ENCODE measurements at regions of chr12 and their contacts with region 1.

Region 1: DNA sequence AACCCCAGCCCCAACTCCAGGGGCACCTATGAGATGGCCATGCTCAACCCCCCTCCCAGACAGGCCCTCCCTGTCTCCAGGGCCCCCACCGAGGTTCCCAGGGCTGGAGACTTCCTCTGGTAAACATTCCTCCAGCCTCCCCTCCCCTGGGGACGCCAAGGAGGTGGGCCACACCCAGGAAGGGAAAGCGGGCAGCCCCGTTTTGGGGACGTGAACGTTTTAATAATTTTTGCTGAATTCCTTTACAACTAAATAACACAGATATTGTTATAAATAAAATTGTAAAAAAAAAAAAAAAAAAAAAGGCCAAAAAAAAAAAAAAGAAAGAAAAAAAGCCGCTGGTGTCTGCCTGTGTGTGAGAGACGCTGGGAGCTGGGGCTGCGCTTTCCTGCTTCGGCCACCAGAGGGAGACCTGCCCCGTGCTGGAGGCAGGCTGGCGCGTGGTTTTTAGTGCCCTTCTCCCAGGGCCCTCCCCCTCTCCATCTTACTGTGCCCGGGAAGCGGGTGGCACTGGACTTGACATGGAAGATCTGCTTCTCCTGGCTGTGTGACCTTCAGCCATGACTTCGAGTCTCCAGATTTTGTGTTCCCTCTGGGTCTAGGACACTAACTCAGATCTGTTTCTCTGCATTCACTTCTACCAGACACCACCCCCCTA is 3.4 kb upstream of the NXPH4 start:
- DNase-seq: peak; percentile 92
- ATAC-seq: peak; percentile 69
- H3K4me3 Mint-ChIP-seq: no peak overlapping the region
- H3K27ac Mint-ChIP-seq: no peak overlapping the region
- H3K4me1 Mint-ChIP-seq: peaks cover 25% of the 10 kb centered on the region
- H3K27me3 Mint-ChIP-seq: peaks cover 38% of the 10 kb centered on the region

Region 2: GRCh38 chr12:57129889-57130288 is 83.3 kb before region 1 on chr12:
- CTCF ChIA-PET with region 1: no interaction called
- POLR2A ChIA-PET with region 1: no interaction called
- intact Hi-C with region 1: no loop called
- DNase-seq: no peak
- ATAC-seq: no peak
- H3K4me3 Mint-ChIP-seq: peak overlapping the region; percentile 18
- H3K27ac Mint-ChIP-seq: no peak overlapping the region
- H3K4me1 Mint-ChIP-seq: peaks cover 22% of the 10 kb centered on the region
- H3K27me3 Mint-ChIP-seq: peaks cover 3% of the 10 kb centered on the region

Region 3: DNA sequence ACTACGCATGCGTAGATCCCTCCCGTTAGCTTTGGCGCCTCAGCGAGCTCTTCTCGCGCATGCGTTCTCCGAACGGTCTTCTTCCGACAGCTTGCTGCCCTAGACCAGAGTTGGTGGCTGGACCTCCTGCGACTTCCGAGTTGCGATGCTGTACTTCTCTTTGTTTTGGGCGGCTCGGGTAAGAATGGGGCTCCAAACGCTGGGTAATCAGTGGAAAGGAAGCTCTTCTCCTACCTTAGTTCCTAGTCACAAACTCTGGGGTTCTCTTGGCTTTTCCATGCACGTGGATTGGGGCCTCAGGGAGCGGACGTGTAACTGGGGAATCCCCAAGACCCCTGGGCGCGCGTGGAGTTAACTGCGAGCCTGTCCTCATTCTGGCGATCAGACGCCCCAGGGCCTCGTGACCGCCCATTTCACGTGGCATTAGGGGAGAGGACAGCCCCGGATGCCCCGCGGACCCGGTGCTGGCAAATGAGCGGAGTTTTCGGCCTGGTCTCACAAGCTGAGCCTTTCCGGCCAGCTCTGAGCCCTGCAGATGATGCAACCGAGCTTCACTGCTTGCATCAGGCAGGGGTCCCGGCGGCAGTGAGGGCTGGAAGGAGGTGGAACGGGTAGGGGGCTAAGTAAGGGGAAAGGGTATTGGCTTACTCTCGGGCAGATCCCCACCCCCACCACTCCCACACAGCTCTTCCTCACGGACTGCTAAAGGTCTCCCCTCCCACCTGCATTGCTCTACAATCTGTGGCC is 16.6 kb after region 1 on chr12 and contains the start of gene SHMT2:
- CTCF ChIA-PET with region 1: interaction called, 108 read pairs
- POLR2A ChIA-PET with region 1: interaction called, 4 read pairs
- intact Hi-C with region 1: loop called in 1 of 2 experiments (anchors 2 kb)
- DNase-seq: peak; percentile 97
- ATAC-seq: peak; percentile 73
- H3K4me3 Mint-ChIP-seq: peak within 1 kb of the TSS; percentile 100
- H3K27ac Mint-ChIP-seq: peak within 1 kb of the TSS; percentile 99
- H3K4me1 Mint-ChIP-seq: peaks cover 65% of the 10 kb centered on the region
- H3K27me3 Mint-ChIP-seq: peaks cover 19% of the 10 kb centered on the region
- total RNA-seq, gene SHMT2: 436 to 487 TPM

Region 4: DNA sequence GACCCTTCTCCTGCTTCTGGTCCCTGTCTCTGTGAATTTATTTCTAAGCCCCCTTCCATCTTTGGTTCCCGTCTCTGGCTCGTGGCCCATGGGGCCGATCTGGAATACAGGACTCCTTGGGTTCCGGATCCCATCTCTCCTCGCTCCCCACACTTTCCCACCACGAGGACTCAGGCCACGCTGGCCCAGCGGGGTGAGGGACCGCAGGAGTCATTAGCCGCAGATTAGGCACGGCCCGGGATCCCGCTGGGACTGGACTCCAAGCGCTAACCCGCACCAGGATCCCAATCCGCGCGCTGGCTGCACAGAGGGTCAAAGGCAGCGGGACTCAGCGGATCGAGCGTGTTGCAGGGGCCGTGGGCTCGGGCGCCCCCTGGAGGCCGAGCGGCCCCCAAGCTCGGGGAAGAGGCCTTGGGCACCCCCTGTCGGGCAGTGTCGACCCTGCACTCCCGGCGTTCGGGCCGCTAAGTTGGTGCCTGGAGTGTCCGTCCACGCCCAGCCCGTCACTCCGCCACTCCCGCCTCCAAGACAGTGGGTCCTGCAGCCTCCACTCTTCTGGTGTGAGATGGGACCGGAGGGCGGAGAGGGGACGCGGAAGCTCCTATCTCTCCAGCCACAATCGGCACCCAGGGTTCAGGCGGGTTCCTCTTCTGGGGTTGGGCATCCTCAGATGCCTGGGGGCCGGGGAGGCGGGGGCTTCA is 25.8 kb after region 1 on chr12:
- CTCF ChIA-PET with region 1: interaction called, 167 read pairs
- POLR2A ChIA-PET with region 1: no interaction called
- intact Hi-C with region 1: loop called (anchors 1 kb)
- DNase-seq: peak; percentile 94
- ATAC-seq: peak; percentile 57
- H3K4me3 Mint-ChIP-seq: peak overlapping the region; percentile 83
- H3K27ac Mint-ChIP-seq: peak overlapping the region; percentile 80
- H3K4me1 Mint-ChIP-seq: peaks cover 70% of the 10 kb centered on the region
- H3K27me3 Mint-ChIP-seq: peaks cover 44% of the 10 kb centered on the region

Region 5: GRCh38 chr12:57632694-57633477 is 419.7 kb after region 1 on chr12 and contains the start of gene B4GALNT1:
- CTCF ChIA-PET with region 1: no interaction called
- POLR2A ChIA-PET with region 1: no interaction called
- intact Hi-C with region 1: loop called in 1 of 2 experiments (anchors 5 kb)
- DNase-seq: peak; percentile 81
- ATAC-seq: peak; percentile 86
- H3K4me3 Mint-ChIP-seq: peak within 1 kb of the TSS; percentile 54
- H3K27ac Mint-ChIP-seq: no peak within 1 kb of the TSS
- H3K4me1 Mint-ChIP-seq: peaks cover 7% of the 10 kb centered on the region
- H3K27me3 Mint-ChIP-seq: peaks cover 49% of the 10 kb centered on the region
- total RNA-seq, gene B4GALNT1: 1.4 to 1.5 TPM